ENCODE measurements at regions of chr1 and their contacts with region 1.

Region 1: DNA sequence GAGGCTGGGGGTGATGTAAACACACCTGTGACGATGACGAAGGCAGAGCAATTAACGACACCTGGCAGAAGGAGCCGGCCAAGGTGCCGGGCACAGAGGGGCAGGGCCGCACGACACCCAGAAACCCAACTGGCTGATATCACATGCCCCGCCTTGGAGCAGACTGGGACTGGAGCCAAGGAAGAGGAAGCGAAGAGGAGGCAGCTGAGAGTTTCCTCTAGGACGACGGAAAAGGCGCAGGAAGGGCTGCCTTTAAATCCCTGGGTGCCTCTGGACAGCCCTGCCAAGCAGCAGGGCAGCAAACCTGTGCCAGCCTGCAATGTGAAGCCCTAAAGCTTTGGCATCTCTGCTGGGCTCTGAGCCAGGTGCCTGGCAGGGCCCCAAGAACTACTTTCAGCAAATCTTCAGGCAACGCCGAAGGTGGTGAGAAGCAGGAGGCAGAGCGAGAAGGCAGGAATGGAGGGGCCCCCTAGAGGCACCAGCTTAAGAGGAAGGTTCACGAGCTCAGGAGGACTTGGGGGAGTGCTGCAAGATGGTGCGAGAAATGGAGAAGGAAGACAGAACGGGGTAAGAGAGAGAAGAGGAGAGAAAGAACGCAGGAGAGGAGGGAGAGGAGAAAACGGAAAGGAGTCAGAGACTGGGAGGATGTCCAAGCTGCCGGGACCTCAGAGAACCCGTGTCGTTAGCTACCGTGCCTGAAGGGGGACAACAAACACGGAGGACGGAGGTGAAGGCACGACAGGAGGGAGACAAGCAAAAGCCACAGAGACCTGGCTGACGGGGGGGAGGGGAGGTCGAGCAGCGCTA is 25.3 kb upstream of the PEF1 start:
- DNase-seq: peak; percentile 74 to 86 (median 83)
- ATAC-seq: peak; percentile 58 to 78 (median 66)
- H3K4me3 ChIP-seq: peak overlapping the region in 10 of 12 donors; percentile 12 to 56 (median 44)
- H3K27ac ChIP-seq: peak overlapping the region; percentile 17 to 90 (median 72)
- H3K4me1 ChIP-seq: peaks cover 0 to 85% (median 55%) of the 10 kb centered on the region in 12 donors
- H3K27me3 ChIP-seq: peaks cover 0 to 4% (median 0%) of the 10 kb centered on the region in 9 donors
- CTCF ChIP-seq: peak in 7 of 12 donors; percentile 1 to 25 (median 17)
- POLR2A ChIP-seq: no peak

Region 2: DNA sequence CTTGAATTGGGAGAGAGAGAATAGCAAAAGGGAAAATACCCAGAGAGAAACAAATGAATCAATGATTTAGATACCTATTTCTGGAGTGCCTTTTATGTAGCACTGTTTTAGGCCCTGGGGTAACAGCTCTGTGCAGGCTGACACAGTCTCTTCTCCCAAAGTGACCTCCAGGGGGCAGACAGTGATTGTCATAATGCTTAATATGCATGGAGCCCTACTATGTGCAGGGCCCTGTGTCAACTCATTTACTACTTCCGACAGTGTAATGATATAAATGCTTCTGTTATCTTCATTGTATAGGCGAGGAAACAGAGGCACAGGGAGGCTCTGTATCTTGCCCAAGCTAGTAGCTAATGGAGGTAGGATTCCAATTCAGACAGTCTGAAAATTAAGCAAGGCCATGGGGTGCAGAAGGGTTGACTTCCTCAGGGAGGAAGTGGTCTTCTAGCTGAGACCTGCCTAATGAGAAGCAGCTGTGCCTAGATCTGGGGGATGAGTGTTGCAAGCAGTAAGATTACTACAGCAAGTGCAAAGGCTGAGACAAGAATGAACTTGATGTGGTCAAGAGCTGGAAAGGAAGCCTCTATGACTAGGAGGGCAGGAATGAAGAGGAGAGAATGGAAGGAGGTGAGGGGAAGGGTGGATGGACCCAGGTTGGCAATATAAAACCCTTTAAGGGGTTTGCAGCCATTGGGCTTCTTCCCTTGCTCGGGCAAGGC is 273.2 kb before region 1 on chr1:
- intact Hi-C with region 1: no loop called
- DNase-seq: no peak
- ATAC-seq: no peak
- H3K4me3 ChIP-seq: no peak overlapping the region
- H3K27ac ChIP-seq: no peak overlapping the region
- H3K4me1 ChIP-seq: peaks cover 0 to 12% (median 5%) of the 10 kb centered on the region in 12 donors
- H3K27me3 ChIP-seq: peaks cover 0 to 3% (median 0%) of the 10 kb centered on the region in 9 donors
- CTCF ChIP-seq: peak in 5 of 12 donors; percentile 8 to 24 (median 11)
- POLR2A ChIP-seq: no peak

Region 3: DNA sequence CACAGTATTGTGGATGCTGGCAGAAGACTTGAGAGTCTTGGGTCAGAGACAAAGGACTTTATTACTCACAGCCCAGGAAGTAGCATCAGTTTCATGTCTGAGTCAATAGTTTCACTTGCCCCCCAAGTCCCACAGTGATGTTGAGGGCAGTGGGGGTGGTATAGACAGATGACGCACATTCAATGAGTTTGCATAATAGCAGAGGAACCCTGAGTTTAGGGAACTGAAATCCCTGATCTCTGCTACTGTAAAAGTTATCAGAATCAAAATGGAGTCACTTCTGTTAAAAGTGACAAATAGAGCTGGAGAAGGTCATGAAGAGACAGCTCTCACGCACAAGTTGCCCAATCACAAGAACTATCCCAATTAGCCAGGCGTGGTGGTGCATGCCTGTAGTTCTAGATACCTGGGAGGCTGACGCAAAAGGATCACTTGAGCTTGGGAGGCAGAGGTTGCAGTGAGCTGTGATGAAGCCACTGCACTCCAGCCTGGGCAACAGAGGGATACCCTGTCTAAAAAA is 64.0 kb before region 1 on chr1:
- intact Hi-C with region 1: no loop called
- DNase-seq: no peak
- ATAC-seq: no peak
- H3K4me3 ChIP-seq: no peak overlapping the region
- H3K27ac ChIP-seq: no peak overlapping the region
- H3K4me1 ChIP-seq: no peaks in the 10 kb centered on the region
- H3K27me3 ChIP-seq: no peaks in the 10 kb centered on the region
- CTCF ChIP-seq: no peak
- POLR2A ChIP-seq: no peak

Region 4: DNA sequence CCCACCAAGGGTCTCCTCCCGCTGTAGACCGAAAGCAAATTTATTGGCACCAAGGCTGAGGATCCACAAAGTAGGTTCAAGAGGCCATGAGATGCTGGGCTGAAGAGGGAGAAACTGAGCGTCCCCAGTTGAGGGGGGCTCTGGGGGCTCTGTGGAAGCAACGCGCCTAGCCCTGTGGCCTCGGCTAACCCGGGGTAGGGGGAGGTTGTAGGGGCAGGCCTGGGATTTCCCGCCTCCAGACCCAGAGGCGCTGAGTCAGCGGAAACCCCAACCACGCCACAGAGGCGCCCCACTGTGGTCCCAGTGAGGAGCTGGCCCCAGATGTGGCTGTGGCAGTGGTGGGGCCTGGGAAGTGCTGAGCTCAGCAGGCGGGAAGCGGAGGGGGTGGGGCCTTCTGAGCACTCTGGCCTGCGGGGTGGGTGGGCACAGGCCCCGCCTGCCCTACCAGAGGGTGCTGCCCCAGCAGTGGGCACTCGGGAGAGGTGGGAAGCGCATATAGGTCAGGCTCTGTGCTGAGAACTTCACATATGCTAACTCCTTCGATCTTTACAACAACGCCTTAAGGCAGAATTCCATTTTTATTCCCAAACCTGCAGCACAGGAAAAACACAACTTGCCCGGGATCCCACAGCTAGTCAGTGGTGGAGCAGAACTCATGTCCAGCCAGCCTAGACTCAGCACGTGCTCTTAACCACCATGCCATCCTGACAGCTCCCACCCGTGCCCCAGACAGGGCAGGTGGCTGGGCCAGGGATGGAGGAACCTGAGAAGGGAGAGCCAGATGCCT is 35.3 kb after region 1 on chr1:
- intact Hi-C with region 1: loop called in 3 of 10 experiments (anchors 5 kb)
- DNase-seq: peak; percentile 42 to 77 (median 56)
- ATAC-seq: peak in 2 of 4 donors; percentile 19 to 23
- H3K4me3 ChIP-seq: peak overlapping the region in 8 of 12 donors; percentile 12 to 63 (median 54)
- H3K27ac ChIP-seq: peak overlapping the region in 11 of 12 donors; percentile 26 to 88 (median 75)
- H3K4me1 ChIP-seq: peaks cover 5 to 56% (median 35%) of the 10 kb centered on the region in 12 donors
- H3K27me3 ChIP-seq: peaks cover 0 to 23% (median 0%) of the 10 kb centered on the region in 9 donors
- CTCF ChIP-seq: peak in 4 of 12 donors; percentile 9 to 31 (median 20)
- POLR2A ChIP-seq: no peak

Region 5: GRCh38 chr1:31733389-31734219 is 63.6 kb after region 1 on chr1:
- intact Hi-C with region 1: no loop called
- DNase-seq: peak in 1 of 5 donors; percentile 14
- ATAC-seq: peak in 1 of 4 donors; percentile 39
- H3K4me3 ChIP-seq: no peak overlapping the region
- H3K27ac ChIP-seq: no peak overlapping the region
- H3K4me1 ChIP-seq: no peaks in the 10 kb centered on the region
- H3K27me3 ChIP-seq: no peaks in the 10 kb centered on the region
- CTCF ChIP-seq: no peak
- POLR2A ChIP-seq: no peak

Region 6: DNA sequence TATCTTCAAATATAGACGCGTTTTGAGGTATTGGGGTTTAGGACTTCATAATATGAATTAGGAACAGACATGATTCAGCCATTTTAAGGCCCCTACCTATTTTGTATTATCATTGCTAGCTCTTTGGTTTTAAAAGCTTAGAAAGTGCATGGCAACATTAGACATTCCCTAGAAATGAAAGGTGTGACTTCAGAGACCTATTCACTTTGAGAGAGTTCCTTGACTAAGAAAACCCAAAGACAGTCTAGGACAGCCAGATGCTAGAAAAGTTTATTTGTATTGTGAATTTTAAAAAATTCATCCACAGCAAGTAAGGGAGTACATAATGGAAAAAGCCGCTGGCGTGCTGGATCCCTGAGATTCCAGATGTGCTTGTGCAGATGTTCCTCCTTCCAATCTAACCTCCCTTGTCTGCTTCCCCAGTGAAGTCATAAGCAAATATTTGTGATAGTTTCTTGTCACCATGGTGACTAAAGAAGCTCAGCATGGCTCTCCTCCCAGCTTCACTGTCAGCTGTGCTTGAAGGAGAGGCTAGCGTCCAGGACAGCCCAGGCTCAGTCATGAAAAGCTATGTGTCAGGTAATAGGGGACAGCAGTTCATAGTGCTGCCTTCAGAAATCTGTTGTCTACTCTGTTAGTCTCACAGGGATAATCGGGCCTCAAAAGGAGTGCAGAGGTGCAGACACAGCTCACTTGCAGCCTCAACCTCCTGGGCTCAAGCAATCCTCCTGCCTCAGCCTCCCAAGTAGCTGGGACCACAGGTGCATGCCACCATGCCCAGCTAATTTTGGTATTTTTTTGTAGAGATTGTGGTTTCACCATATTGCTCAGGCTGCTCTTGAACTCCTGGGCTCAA is 472.7 kb after region 1 on chr1:
- intact Hi-C with region 1: no loop called
- DNase-seq: peak in 4 of 5 donors; percentile 44 to 64 (median 62)
- ATAC-seq: peak; percentile 90 to 95 (median 92)
- H3K4me3 ChIP-seq: no peak overlapping the region
- H3K27ac ChIP-seq: peak overlapping the region; percentile 7 to 81 (median 52)
- H3K4me1 ChIP-seq: peaks cover 0 to 49% (median 24%) of the 10 kb centered on the region in 12 donors
- H3K27me3 ChIP-seq: no peaks in the 10 kb centered on the region
- CTCF ChIP-seq: no peak
- POLR2A ChIP-seq: no peak